ENCODE measurements at regions of chr12 and their contacts with region 1.

Region 1: GRCh38 chr12:9906873-9907272 is 25.3 kb downstream of the CLEC2A start:
- DNase-seq: no peak
- ATAC-seq: no peak
- H3K4me3 ChIP-seq: no peak overlapping the region
- H3K27ac ChIP-seq: no peak overlapping the region
- H3K4me1 ChIP-seq: no peaks in the 10 kb centered on the region
- H3K27me3 ChIP-seq: no peaks in the 10 kb centered on the region

Region 2: DNA sequence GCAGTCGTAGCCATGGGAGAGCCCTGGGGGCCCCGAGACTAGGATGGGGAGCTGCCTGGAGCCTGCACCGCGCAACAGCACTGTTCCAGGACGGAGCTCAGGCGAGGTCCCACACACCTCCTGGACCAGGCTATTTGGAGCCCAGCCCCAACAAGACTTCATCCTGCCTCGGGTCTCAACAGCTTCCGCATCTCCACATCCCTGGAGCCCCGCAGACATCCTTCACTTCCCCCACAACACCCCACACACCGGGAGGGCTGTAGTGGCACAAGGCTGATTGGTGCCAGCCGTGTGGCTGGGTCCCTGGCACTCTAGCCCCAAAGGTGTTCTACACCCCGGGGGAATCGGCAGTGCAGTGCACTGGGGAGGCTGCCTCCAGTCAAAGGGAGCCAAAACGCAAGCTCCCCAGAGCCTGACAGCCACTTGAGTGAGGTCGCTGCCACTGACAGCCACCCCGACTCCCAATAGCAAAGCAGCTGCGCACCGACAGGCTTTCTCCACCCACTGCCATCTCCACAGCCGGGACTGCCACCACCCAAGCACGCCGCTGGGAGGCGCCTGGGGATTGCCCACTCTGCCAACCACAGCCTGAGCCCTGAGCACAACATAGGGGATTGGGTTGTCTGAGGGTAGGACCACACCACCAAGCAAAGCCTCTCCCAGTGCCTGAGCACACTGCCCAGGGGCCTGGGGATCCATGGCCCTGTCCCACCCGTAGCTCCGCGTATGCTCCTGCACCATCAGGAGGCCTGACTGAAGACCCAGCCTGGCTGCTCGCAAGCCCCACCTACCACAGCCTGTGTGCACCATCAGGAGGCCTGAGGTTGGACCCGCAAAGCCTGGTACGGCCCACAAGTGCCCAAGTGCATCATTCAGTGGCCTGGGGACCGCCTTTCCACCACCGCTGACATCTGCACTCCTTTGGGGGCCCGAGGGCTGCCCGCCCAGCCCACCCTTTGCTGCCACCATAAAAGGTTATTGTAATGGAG is 92.8 kb before region 1 on chr12:
- intact Hi-C with region 1: loop called in 1 of 4 experiments (anchors 10 kb)
- DNase-seq: peak; percentile 71 to 90 (median 89)
- ATAC-seq: peak; percentile 96 to 97
- H3K4me3 ChIP-seq: no peak overlapping the region
- H3K27ac ChIP-seq: no peak overlapping the region
- H3K4me1 ChIP-seq: no peaks in the 10 kb centered on the region
- H3K27me3 ChIP-seq: no peaks in the 10 kb centered on the region

Region 3: DNA sequence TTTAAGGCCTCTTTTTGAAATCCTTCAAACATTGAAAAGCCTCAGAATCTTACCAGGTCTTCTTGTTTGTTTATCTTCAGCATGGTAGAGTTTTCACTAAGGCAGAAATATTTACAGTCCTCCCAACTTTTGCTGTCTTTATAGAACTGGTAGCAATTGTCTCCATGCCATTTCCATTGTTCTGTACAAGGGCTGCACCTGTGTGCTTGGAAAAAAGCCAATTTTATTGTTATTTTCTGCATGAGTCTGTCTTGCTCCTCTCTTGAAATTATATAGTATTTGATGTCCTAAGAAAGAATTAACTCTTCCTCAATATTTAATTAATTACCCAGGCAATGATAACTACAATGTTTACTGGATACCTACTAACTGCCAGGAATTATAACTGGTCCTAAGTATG is 168.6 kb after region 1 on chr12:
- intact Hi-C with region 1: no loop called
- DNase-seq: no peak
- ATAC-seq: no peak
- H3K4me3 ChIP-seq: no peak overlapping the region
- H3K27ac ChIP-seq: no peak overlapping the region
- H3K4me1 ChIP-seq: no peaks in the 10 kb centered on the region
- H3K27me3 ChIP-seq: no peaks in the 10 kb centered on the region

Region 4: GRCh38 chr12:10101042-10101579 is 194.2 kb after region 1 on chr12:
- intact Hi-C with region 1: no loop called
- DNase-seq: peak; percentile 27 to 71 (median 63)
- ATAC-seq: peak; percentile 75 to 84
- H3K4me3 ChIP-seq: no peak overlapping the region
- H3K27ac ChIP-seq: no peak overlapping the region
- H3K4me1 ChIP-seq: peaks cover 6% of the 10 kb centered on the region
- H3K27me3 ChIP-seq: no peaks in the 10 kb centered on the region

Measured in right cardiac atrium (tissue), 5 donors.